AG04449 (cell line): ENCODE measurements at regions of chr14 and their contacts with region 1.

Region 1: GRCh38 chr14:70821584-70822529 is 12.5 kb upstream of the MAP3K9 start:
- DNase-seq: no peak
- H3K4me3 ChIP-seq: peak overlapping the region; percentile 70
- CTCF ChIP-seq: no peak

Region 2: GRCh38 chr14:70776197-70776596 is 45.7 kb before region 1 on chr14:
- CTCF ChIA-PET with region 1: no interaction called
- POLR2A ChIA-PET with region 1: no interaction called
- DNase-seq: no peak
- H3K4me3 ChIP-seq: no peak overlapping the region
- CTCF ChIP-seq: no peak

Region 3: DNA sequence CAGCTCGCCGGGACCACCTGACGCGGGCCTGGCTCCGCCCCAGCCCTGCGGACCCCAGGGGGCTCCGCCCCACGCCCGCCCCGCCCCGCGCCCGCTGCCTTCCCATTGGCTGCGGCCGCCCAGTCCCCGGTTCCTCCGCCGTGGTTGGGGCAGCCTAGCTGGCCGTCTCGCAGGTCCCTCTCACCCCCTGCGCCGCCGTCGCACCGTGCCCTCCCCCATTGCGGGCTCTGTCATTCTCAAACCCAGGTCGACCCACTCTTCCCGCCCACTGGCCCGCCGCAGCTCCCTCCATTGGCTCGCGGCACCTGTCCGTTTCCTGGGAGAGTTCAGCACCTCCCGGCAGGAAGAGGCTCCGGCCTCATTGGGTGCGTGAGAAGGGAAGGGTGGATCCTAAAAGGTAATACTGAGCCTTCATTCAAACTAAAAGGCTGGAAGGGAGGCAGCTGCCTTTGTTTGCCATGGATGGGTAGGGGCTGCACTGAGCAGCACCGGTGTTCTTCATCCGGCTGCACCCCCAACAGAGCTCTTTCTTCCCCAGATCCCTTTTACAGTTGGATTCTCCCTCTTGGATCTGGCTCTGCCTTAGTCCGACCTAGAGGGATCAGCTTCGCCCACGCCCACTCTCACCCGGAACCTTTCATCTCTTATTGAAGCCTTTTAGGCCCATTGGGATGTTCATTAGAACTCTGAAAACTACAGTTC is 12.2 kb before region 1 on chr14:
- CTCF ChIA-PET with region 1: interaction called, 25 read pairs
- POLR2A ChIA-PET with region 1: no interaction called
- DNase-seq: no peak
- H3K4me3 ChIP-seq: peak overlapping the region; percentile 53
- CTCF ChIP-seq: no peak

Region 4: GRCh38 chr14:70934502-70935134 is 112.8 kb after region 1 on chr14:
- CTCF ChIA-PET with region 1: interaction called, 12 read pairs
- POLR2A ChIA-PET with region 1: no interaction called
- DNase-seq: peak; percentile 31
- H3K4me3 ChIP-seq: no peak overlapping the region
- CTCF ChIP-seq: no peak

Region 5: DNA sequence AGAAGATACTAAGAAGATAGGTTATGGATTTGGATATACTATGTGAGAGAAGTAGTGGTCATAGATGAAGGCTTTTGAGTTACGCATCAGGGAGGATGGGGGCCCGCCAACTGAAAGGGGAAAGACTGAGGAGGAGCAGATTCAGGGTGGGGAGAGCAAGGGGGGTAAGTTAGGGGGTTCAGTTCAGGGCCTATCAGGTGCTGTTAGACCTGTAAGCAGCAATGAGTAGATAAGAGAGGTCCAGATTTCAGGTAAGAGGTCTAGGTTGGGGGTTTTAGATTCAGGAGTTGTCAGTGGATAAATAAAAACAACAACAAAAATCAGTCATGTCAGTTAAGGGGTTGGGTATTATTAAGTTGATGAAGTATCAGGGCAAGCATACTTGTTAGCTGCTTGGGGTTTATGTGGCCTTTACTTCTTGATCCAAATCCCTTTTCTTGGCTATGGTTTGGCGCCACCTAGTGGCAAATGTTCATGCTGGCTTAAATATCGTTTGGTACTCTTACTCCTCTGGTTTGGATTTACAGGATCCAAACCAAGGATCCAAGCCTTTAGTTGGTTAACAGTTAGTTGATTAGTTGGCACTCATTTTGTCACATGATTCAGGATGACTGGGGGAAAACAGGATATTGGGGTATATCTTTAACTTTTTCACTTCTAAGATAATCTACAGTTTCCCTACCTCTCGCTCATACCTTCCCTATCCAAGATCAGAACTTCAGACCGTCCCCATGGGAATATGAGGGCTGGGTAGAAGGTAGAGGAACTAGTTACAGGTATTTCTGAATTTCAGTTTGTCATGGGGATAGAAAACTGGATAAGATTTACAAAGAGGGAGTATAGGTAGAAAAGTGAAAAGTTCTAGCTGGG is 150.5 kb after region 1 on chr14:
- CTCF ChIA-PET with region 1: interaction called, 112 read pairs
- POLR2A ChIA-PET with region 1: no interaction called
- DNase-seq: peak; percentile 62
- H3K4me3 ChIP-seq: no peak overlapping the region
- CTCF ChIP-seq: peak; percentile 71

Region 6: GRCh38 chr14:70988452-70988851 is 166.6 kb after region 1 on chr14:
- CTCF ChIA-PET with region 1: interaction called, 24 read pairs
- POLR2A ChIA-PET with region 1: no interaction called
- DNase-seq: no peak
- H3K4me3 ChIP-seq: no peak overlapping the region
- CTCF ChIP-seq: no peak